ENCODE measurements at regions of chr17 and their contacts with region 1.

Region 1: GRCh38 chr17:40803617-40804082 is 3.9 kb upstream of the KRT28 start:
- DNase-seq: no peak
- H3K4me3 ChIP-seq: no peak overlapping the region
- H3K27ac ChIP-seq: no peak overlapping the region
- H3K4me1 ChIP-seq: no peaks in the 10 kb centered on the region
- H3K27me3 ChIP-seq: no peaks in the 10 kb centered on the region
- CTCF ChIP-seq: peak; percentile 66 to 89 (median 75)
- POLR2A ChIP-seq: no peak

Region 2: GRCh38 chr17:40559954-40560591 is 243.6 kb before region 1 on chr17:
- intact Hi-C with region 1: no loop called
- DNase-seq: peak in 1 of 2 donors; percentile 97
- H3K4me3 ChIP-seq: peak overlapping the region in 1 of 2 donors; percentile 12
- H3K27ac ChIP-seq: peak overlapping the region; percentile 88
- H3K4me1 ChIP-seq: peaks cover 53% of the 10 kb centered on the region
- H3K27me3 ChIP-seq: no peaks in the 10 kb centered on the region
- CTCF ChIP-seq: peak; percentile 92 to 99 (median 98)
- POLR2A ChIP-seq: no peak

Region 3: DNA sequence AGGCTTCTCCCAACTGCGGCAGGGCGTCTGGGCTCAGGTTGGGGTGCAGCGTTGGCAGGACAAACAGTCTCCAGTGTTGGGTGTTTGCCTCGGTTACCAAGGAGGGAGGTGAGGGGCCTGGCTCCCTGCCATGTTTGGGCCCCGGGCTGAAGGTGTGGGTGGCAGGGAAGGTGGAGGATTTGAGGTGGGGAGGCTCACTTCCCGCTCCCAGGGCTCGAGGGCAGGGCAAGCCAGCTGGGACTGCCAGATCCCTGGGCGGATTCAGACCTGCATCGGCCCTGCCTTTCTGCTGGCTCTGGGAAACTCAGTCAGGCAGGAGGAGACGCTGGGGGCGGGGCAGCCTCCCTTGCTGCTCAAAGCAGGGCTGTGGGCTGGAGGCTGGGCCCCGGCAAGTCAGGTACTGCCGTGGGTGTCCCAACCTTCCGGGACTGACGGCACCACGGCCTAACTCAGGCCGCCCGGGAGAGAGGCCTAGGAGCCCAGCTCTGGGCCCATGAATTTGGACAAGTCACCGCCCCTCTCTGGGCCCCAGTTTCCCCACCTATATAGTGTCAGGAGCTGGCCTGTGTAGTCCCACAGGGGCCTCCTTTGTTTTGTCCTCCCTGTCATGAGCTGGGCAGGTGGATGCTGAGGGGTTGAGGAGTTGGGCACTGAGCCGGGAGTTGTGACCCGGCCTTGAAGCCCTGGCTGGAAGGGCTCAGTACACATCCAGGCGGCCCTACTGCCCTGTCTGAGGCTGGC is 852.1 kb after region 1 on chr17:
- intact Hi-C with region 1: loop called (anchors 10 kb)
- DNase-seq: no peak
- H3K4me3 ChIP-seq: no peak overlapping the region
- H3K27ac ChIP-seq: peak overlapping the region; percentile 85
- H3K4me1 ChIP-seq: peaks cover 69% of the 10 kb centered on the region
- H3K27me3 ChIP-seq: no peaks in the 10 kb centered on the region
- CTCF ChIP-seq: no peak
- POLR2A ChIP-seq: no peak

Region 4: DNA sequence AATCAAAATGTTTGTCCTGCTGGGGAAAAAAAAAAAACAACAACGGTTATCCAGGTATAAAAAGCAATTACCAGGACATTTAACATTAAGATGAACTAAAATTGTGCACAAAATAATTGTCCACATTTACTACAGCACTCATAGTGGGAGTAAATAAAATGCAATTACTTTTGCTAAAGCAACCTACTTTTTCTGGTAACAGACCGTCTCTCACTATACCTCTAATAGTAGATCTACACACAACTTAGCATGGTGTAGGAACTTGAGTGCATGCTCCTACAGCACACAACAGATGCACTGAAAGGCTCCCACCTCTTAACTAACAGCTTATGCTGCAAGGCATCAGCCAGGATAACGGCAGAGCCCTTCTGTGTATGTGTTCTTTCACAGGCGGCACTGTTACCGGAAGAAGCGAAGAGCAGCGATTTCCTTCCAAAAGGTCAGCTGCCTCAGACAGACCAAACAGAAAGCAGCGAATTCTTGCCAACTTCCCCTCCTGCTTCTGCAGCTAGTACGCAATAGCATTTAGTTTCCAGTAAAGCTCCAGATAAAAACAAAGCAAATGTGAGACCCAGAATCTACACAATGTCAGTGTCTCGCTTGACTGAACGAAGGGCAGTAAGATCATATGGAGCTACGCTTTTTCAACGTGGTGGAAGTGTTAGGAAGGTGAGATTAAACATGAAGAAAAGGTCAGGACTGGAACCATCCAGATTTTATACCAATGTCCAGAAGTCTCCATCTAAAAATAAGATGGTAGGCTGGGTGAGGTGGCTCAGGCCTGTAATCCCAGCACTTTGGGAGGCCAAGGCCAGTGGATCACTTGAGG is 1444.9 kb after region 1 on chr17:
- intact Hi-C with region 1: no loop called
- DNase-seq: peak in 1 of 2 donors; percentile 93
- H3K4me3 ChIP-seq: peak overlapping the region; percentile 9 to 21
- H3K27ac ChIP-seq: peak overlapping the region; percentile 88
- H3K4me1 ChIP-seq: peaks cover 61% of the 10 kb centered on the region
- H3K27me3 ChIP-seq: no peaks in the 10 kb centered on the region
- CTCF ChIP-seq: no peak
- POLR2A ChIP-seq: no peak

Measured in vagina (tissue), 2 donors.